CD8-positive, alpha-beta memory T cell (primary cell): ENCODE measurements at regions of chr3 and their contacts with region 1.

Region 1: DNA sequence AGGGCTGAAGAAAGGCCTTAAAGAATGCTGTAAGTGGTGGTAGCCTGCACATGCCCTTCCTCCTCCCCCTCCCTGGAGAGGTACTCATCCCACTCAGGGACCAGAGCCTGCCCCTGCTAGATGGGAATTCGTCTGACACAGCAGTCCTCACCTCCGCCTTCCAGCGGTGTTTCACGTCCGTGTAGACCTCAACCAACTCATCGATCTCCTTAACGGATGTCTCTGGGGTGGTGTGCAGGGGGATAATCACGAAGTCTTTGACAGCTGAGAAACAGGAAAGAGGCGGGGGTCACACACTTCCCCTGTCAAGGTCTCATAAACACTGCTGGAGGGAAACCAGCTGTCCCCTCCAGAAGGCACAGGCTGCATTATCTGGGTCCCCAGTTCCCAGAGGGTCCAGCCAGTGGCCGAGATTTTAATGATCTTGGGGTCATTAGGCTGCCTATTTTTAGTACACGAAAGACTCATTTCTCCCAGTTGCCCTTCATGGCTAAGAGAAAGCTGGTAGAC is 9.9 kb downstream of the DNASE1L3 start:
- DNase-seq: no peak
- H3K4me3 ChIP-seq: no peak overlapping the region
- H3K4me3 Mint-ChIP-seq: no peak overlapping the region
- H3K27ac ChIP-seq: no peak overlapping the region
- H3K27ac Mint-ChIP-seq: no peak overlapping the region
- H3K4me1 ChIP-seq: no peaks in the 10 kb centered on the region
- H3K4me1 Mint-ChIP-seq: no peaks in the 10 kb centered on the region
- H3K27me3 ChIP-seq: no peaks in the 10 kb centered on the region
- H3K27me3 Mint-ChIP-seq: peaks cover 14 to 18% of the 10 kb centered on the region in 2 donors

Region 2: DNA sequence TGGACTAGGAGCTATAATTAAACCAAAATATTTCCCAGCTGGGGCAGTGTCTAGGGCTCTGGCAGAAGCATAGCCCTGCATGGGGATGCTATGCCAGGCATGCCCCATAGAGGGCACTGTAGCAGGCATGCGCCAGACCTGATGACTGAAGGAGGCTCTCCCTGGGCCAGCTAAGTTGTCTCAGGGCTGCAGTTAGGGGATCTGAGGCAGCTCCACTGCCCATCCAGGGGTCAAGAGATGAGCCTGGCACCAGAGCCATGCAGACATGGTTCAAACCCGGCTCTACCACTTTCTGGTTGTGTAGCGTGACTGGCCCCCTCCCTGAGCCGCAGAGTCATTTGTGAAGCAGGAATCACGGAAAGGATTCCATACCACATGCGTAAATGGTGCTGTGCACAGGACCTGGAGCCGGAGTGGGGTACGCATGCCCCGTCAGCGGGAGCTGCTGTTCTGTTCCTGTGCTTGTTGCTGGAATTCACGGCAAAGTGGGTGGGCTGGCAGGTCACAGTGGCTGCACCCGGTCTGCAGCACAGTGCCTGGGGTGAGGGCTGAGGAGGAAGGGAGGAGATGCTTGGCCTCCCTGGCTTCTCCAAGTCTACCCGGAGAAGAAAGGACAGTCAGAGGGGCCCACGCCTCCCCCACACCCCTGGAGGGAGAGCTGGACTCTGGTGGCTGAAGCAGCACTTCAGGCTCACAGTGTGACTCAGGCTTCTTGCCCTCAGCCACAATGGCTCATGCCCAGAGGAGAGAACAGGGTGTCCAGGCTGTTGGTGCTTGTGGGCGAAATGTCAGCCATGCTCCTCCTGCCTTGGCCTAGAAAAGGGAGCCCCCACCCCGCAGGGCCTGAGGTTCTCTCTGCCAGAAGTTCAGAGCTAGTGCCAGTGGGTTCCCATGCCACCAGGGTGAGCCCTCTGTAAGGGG is 33.2 kb before region 1 on chr3:
- CTCF ChIA-PET with region 1: no interaction called
- POLR2A ChIA-PET with region 1: no interaction called
- DNase-seq: peak in 4 of 5 donors; percentile 13 to 48 (median 29)
- H3K4me3 ChIP-seq: no peak overlapping the region
- H3K4me3 Mint-ChIP-seq: peak overlapping the region in 1 of 7 donors; percentile 36
- H3K27ac ChIP-seq: no peak overlapping the region
- H3K27ac Mint-ChIP-seq: peak overlapping the region in 2 of 8 donors; percentile 24 to 39
- H3K4me1 ChIP-seq: no peaks in the 10 kb centered on the region
- H3K4me1 Mint-ChIP-seq: no peaks in the 10 kb centered on the region
- H3K27me3 ChIP-seq: no peaks in the 10 kb centered on the region
- H3K27me3 Mint-ChIP-seq: no peaks in the 10 kb centered on the region

Region 3: DNA sequence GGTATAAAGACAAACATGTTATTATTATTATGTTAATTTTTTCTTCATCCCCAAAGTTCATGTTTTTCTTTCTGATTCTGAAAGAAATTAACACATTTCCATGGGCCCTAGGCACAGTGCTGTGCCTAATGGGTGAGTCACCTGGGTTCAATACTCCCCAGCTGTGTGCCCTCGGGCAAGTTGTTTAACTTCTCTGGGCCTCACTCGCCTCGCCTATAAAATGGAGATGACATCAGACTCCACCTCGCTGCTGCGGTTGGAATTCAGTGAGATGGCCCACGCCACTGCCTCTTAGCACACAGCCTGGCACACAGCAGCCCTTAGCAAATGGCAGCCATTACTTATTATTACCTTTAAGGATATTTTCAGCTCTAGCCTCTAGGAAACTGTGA is 12.7 kb before region 1 on chr3:
- CTCF ChIA-PET with region 1: interaction called, 12 read pairs
- POLR2A ChIA-PET with region 1: no interaction called
- DNase-seq: no peak
- H3K4me3 ChIP-seq: no peak overlapping the region
- H3K4me3 Mint-ChIP-seq: no peak overlapping the region
- H3K27ac ChIP-seq: no peak overlapping the region
- H3K27ac Mint-ChIP-seq: no peak overlapping the region
- H3K4me1 ChIP-seq: no peaks in the 10 kb centered on the region
- H3K4me1 Mint-ChIP-seq: peaks cover 0 to 3% (median 0%) of the 10 kb centered on the region in 3 donors
- H3K27me3 ChIP-seq: no peaks in the 10 kb centered on the region
- H3K27me3 Mint-ChIP-seq: no peaks in the 10 kb centered on the region